BJ (cell line): ENCODE measurements at regions of chr9 and their contacts with region 1.

Region 1: GRCh38 chr9:97921959-97922724 is at the start of gene TRMO:
- DNase-seq: peak; percentile 81
- H3K4me3 ChIP-seq: peak within 1 kb of the TSS; percentile 56
- H3K27me3 ChIP-seq: 0 out of 2 replicates have a peak, but pooled peaks cover 2% of the 10 kb centered on the region
- CTCF ChIP-seq: peak; percentile 76
- polyA plus RNA-seq, gene TRMO: 11.2 and 17.2 TPM in 2 replicates

Region 2: GRCh38 chr9:96020792-96021550 is 1901.2 kb before region 1 on chr9:
- CTCF ChIA-PET with region 1: no interaction called
- POLR2A ChIA-PET with region 1: no interaction called
- DNase-seq: no peak
- H3K4me3 ChIP-seq: peak overlapping the region; percentile 48
- H3K27me3 ChIP-seq: peaks cover 29% of the 10 kb centered on the region
- CTCF ChIP-seq: no peak

Region 3: GRCh38 chr9:97938081-97938644 is 16.0 kb after region 1 on chr9 and contains the start of gene HEMGN:
- CTCF ChIA-PET with region 1: interaction called, 27 read pairs
- POLR2A ChIA-PET with region 1: no interaction called
- DNase-seq: no peak
- H3K4me3 ChIP-seq: no peak within 1 kb of the TSS
- H3K27me3 ChIP-seq: peaks cover 32% of the 10 kb centered on the region
- CTCF ChIP-seq: no peak
- polyA plus RNA-seq, gene HEMGN: not detected in 2 replicates

Region 4: DNA sequence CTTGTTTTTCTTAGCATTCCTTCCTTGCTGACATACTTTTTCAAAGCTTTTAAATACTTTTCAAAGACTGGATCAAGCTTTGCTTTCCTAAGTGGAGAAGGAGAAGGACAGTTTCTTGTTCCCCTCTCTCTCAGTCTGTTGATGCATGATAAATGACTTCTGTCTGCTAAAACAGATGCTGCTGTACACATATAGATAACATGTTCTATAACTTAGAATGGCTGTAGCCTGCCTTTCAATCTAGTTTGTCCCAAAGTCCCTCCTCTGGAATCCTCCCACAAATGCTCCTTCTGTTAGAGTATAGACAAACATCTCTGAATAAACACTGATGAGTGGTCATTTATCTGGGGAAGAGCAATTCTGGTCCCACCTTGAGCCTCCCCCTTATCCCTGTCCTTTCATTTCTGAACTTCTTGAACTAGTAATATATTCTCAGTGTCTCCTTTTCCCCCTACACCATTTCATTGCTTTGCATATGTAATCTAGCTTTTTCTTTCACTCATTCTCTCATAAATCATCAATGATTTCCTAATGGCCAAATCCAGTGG is 21.2 kb after region 1 on chr9:
- CTCF ChIA-PET with region 1: interaction called, 13 read pairs
- POLR2A ChIA-PET with region 1: no interaction called
- DNase-seq: no peak
- H3K4me3 ChIP-seq: no peak overlapping the region
- H3K27me3 ChIP-seq: peaks cover 17% of the 10 kb centered on the region
- CTCF ChIP-seq: no peak

Region 5: GRCh38 chr9:97993000-97993399 is 70.9 kb after region 1 on chr9:
- CTCF ChIA-PET with region 1: interaction called, 6 read pairs
- POLR2A ChIA-PET with region 1: interaction called, 11 read pairs
- DNase-seq: no peak
- H3K4me3 ChIP-seq: no peak overlapping the region
- H3K27me3 ChIP-seq: no peaks in the 10 kb centered on the region
- CTCF ChIP-seq: no peak

Region 6: DNA sequence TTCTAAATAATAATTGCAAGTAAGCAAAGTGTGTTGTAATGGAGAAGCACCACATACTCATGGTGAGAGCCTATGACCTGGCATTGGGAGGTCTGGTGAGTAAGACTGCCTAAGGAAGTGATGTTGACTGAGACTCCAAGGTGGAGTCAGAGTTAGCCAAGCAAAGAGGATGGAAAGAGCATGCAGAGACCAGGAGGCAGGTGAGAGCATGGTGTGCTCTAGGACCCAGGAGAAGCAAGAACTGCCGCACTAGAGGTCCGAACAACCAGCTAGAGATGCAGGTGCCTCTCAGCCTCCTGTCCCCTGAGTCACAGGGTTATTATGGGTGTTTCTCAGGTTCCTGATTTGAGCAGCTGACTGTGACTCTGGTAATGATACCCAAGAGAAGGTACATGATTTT is 88.3 kb after region 1 on chr9:
- CTCF ChIA-PET with region 1: no interaction called
- POLR2A ChIA-PET with region 1: no interaction called
- DNase-seq: no peak
- H3K4me3 ChIP-seq: no peak overlapping the region
- H3K27me3 ChIP-seq: no peaks in the 10 kb centered on the region
- CTCF ChIP-seq: no peak

Region 7: DNA sequence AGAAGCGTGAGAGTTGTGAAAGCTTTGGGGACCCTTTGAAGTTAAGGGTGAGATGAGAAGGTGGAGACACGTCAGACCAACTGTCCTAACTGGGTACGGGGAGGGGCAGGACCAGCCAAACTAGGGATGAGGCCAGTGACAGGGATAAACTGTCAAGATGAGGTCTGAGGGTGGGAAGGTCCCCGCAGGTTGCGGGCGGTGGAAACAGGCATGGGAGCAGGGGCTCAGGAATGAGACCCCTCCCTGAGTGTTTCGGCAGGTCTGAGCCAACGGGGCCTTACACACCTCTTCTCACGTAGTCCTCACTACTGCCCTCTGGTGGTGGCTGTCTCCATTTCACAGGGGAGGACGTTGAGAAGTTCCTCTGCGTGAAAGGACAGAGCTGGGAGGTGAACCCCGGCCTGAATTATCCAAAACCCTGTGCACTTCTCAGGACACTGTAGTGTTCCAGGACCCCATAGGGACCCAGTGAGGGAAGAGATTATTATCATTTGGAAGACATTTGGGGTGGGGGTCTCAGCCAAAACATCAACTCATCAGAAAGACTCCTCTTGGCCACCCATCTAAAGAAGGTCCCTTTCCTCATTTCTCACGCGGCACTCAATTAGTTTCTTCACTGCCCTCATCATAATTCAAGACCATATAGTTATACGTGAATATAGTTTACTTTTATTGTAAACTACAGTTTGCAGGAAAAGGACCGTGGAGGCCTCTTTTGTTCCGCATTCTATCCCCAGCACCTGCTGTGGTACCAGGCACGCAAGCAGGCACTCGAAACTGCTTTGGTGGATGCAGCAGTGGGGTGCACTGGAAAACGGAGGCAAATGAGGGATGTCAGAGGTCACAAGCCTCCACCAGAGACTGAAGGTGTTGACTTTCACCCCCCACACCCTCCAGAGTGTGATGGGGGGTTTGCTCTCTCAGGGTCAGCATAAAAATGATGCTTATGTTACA is 112.7 kb after region 1 on chr9:
- CTCF ChIA-PET with region 1: interaction called, 10 read pairs
- POLR2A ChIA-PET with region 1: no interaction called
- DNase-seq: no peak
- H3K4me3 ChIP-seq: no peak overlapping the region
- H3K27me3 ChIP-seq: no peaks in the 10 kb centered on the region; the same call in 1 of the 2 replicates
- CTCF ChIP-seq: peak; percentile 83

Region 8: GRCh38 chr9:98255578-98256296 is 333.6 kb after region 1 on chr9 and contains the start of gene TBC1D2:
- CTCF ChIA-PET with region 1: interaction called, 37 read pairs
- POLR2A ChIA-PET with region 1: interaction called, 3 read pairs
- DNase-seq: peak; percentile 70
- H3K4me3 ChIP-seq: peak within 1 kb of the TSS; percentile 80
- H3K27me3 ChIP-seq: no peaks in the 10 kb centered on the region
- CTCF ChIP-seq: peak; percentile 40
- polyA plus RNA-seq, gene TBC1D2: 38.8 and 70.3 TPM in 2 replicates

Region 9: GRCh38 chr9:98263482-98264357 is 341.6 kb after region 1 on chr9:
- CTCF ChIA-PET with region 1: interaction called, 12 read pairs
- POLR2A ChIA-PET with region 1: no interaction called
- DNase-seq: no peak
- H3K4me3 ChIP-seq: no peak overlapping the region
- H3K27me3 ChIP-seq: no peaks in the 10 kb centered on the region
- CTCF ChIP-seq: peak; percentile 95